Panc1 (cell line): ENCODE measurements at regions of chr20 and their contacts with region 1.

Region 1: DNA sequence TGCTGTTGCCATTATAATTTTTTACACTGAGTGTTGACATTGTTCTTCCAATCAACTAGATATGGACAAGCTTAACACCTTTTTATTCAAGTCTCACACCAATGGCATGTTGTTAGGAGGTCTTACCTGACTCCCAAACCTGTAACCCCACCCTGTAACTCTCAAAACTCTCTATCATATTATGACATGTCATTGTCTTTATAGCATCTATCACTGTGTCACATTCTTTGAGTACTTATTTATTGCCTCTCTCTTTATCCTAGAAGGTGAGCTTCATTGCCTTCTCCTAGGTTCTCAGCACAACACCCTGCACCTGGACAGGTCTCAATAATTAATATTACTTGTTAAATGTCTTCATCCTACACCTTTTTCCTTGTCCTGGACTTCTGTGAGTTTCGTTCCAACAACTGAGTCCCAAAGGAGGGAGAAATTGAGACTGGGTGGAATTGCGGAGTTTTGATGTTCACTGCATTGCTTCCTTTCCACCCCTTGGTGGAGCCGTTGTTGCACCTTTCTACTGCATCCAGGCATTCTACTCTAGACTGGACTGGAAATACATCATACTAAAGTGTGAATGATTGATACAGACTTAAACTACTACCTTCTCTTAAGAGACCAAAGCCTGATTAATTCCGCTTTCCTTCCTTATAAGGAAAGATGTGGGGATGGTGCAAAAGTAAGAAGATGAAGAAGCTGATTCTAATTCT is 338.0 kb upstream of the CHD6 start:
- DNase-seq: peak; percentile 13
- ATAC-seq: 0 out of 2 replicates have a peak, but pooled peaks have one; percentile 45
- H3K4me3 ChIP-seq: no peak overlapping the region
- H3K27ac ChIP-seq: no peak overlapping the region
- H3K4me1 ChIP-seq: no peaks in the 10 kb centered on the region
- H3K27me3 ChIP-seq: no peaks in the 10 kb centered on the region
- CTCF ChIP-seq: peak; percentile 72

Region 2: DNA sequence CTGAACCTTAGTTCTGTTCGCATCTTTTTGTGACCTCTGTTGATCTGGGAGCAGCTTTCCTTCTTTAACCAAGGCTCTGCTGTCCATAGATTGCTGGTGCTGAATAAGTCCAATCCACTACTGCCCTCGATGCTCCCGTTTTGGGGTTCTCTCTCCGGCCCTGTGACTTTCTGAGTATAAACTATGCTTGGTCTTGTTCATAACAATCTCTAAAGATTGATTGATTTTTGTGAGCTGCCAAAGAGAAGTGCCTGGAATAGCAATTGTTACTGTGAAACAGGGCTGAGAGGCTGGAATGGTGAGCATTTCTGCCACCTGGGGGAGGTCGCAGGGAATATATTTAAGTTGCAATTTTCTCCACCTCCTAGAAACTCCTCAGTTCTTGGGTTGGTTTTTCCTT is 84.9 kb after region 1 on chr20:
- CTCF ChIA-PET with region 1: no interaction called
- POLR2A ChIA-PET with region 1: no interaction called
- in situ Hi-C with region 1: no loop called
- intact Hi-C with region 1: no loop called
- DNase-seq: no peak
- ATAC-seq: no peak
- H3K4me3 ChIP-seq: no peak overlapping the region
- H3K27ac ChIP-seq: no peak overlapping the region
- H3K4me1 ChIP-seq: no peaks in the 10 kb centered on the region
- H3K27me3 ChIP-seq: no peaks in the 10 kb centered on the region
- CTCF ChIP-seq: peak; percentile 24

Region 3: GRCh38 chr20:42161228-42161829 is 205.2 kb after region 1 on chr20:
- CTCF ChIA-PET with region 1: no interaction called
- POLR2A ChIA-PET with region 1: no interaction called
- in situ Hi-C with region 1: no loop called
- intact Hi-C with region 1: no loop called
- DNase-seq: no peak
- ATAC-seq: no peak
- H3K4me3 ChIP-seq: no peak overlapping the region
- H3K27ac ChIP-seq: no peak overlapping the region
- H3K4me1 ChIP-seq: no peaks in the 10 kb centered on the region
- H3K27me3 ChIP-seq: no peaks in the 10 kb centered on the region; the same call in 1 of the 2 replicates
- CTCF ChIP-seq: no peak

Region 4: DNA sequence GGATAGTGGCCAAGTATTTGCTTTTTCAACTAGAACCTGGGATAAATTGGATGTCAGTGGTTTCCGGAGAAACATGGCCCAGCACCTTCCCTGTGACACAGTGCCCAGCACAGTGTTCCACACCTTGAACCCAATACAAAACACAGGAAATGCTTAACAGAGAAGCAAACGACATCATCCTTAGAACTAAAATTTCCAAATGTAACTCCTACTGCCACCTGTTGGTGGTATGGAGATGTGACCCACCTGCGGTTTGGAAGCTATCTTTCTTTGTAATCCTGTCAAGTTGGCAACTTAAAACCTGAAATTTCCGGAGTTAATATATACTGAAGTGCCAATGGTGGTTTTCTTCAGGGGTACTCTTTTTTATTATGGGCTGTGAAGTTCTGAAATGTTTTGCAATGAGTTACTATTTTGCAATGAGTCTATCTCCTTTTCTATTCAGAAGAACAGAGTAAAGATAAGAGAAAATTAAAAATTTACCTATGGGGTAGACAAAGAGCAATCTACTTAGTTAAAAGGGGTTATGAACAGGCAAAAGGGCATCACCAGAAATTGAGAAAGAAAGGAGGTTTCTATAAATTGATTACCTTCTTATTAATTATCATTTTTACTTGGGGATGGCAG is 574.8 kb after region 1 on chr20:
- CTCF ChIA-PET with region 1: no interaction called
- POLR2A ChIA-PET with region 1: no interaction called
- in situ Hi-C with region 1: no loop called
- intact Hi-C with region 1: loop called (anchors 5 kb)
- DNase-seq: peak; percentile 25
- ATAC-seq: no peak
- H3K4me3 ChIP-seq: no peak overlapping the region
- H3K27ac ChIP-seq: no peak overlapping the region
- H3K4me1 ChIP-seq: no peaks in the 10 kb centered on the region
- H3K27me3 ChIP-seq: peaks cover 2% of the 10 kb centered on the region; the same call in 1 of the 2 replicates
- CTCF ChIP-seq: peak; percentile 74